ENCODE measurements at regions of chr11 and their contacts with region 1.

Region 1: DNA sequence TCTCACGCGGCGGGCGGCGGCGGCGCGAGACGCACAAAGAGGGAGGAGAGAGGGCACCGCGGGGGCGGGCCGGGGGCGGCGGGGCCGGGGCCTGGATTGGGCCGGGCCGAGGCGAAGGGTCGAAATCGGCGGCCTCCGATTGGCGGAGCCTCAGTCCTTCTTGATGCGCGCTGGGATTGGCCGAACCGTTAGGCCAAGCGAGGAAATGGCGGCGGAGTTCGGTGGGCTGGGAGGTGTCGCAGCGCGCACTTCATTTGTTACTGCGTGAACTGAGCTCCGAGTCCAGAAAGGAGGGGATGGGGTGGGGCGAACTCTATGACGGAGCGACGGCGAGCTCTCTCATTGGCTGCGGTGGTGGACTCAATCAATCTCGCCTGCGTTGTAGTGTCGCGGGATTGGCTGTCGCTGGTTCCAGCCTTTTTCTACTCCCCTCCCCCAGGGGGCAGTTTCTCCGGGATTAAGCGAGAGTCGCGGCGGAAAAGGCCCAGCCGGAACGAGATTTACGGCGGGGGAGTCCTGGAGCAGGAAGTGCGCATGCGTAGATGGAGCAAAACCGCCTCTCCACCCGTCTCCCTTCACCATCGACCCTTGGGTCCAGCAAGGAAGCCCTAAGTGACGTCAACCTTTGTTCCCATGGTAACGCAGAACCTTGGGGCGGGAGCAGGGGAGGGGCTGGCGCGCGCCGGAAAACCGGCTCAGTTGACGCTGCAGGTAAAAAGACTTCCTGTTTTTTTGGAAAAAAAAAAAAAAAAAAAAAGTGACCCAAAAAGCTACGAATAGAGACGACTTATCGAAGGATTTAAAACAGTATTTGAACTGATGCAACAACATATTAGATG is at the start of gene SF1:
- DNase-seq: peak; percentile 100
- ATAC-seq: peak; percentile 97
- H3K4me3 ChIP-seq: peak within 1 kb of the TSS; percentile 94 to 98 (median 94)
- H3K27ac ChIP-seq: peak within 1 kb of the TSS; percentile 99
- H3K4me1 ChIP-seq: peaks cover 39% of the 10 kb centered on the region
- H3K27me3 ChIP-seq: no peaks in the 10 kb centered on the region; a peak in 1 of 5 replicates
- CTCF ChIP-seq: peak; percentile 57
- EP300 ChIP-seq: 0 out of 4 replicates have a peak, but pooled peaks of 1 of the 2 experiments have one; percentile 6
- POLR2A ChIP-seq: peak; percentile 95 to 97
- RAD21 ChIP-seq: no peak
- total RNA-seq, gene SF1: 42.5 and 70.4 TPM in 2 replicates

Region 2: GRCh38 chr11:64007629-64008282 is 771.0 kb before region 1 on chr11:
- CTCF ChIA-PET with region 1: no interaction called
- POLR2A ChIA-PET with region 1: no interaction called
- in situ Hi-C with region 1: no loop called
- intact Hi-C with region 1: no loop called
- DNase-seq: peak; percentile 89
- ATAC-seq: peak; percentile 90
- H3K4me3 ChIP-seq: peak overlapping the region; percentile 19 to 70 (median 60); a peak in 5 of 6 replicates
- H3K27ac ChIP-seq: no peak overlapping the region
- H3K4me1 ChIP-seq: peaks cover 21% of the 10 kb centered on the region
- H3K27me3 ChIP-seq: no peaks in the 10 kb centered on the region
- CTCF ChIP-seq: peak; percentile 59
- EP300 ChIP-seq: no peak
- POLR2A ChIP-seq: peak in 1 of 2 experiments; percentile 70; a peak in 2 of 4 replicates
- RAD21 ChIP-seq: peak; percentile 20; the same call in 1 of the 2 replicates

Region 3: GRCh38 chr11:64762674-64763525 is 15.8 kb before region 1 on chr11:
- CTCF ChIA-PET with region 1: no interaction called
- POLR2A ChIA-PET with region 1: interaction called, 24 read pairs
- in situ Hi-C with region 1: no loop called
- intact Hi-C with region 1: no loop called
- DNase-seq: no peak
- ATAC-seq: no peak
- H3K4me3 ChIP-seq: no peak overlapping the region
- H3K27ac ChIP-seq: no peak overlapping the region
- H3K4me1 ChIP-seq: peaks cover 27% of the 10 kb centered on the region
- H3K27me3 ChIP-seq: no peaks in the 10 kb centered on the region
- CTCF ChIP-seq: no peak
- EP300 ChIP-seq: no peak
- POLR2A ChIP-seq: peak in 1 of 2 experiments; percentile 50; a peak in 2 of 4 replicates
- RAD21 ChIP-seq: no peak

Region 4: GRCh38 chr11:64803163-64803845 is 24.6 kb after region 1 on chr11 and contains the start of gene MAP4K2:
- CTCF ChIA-PET with region 1: no interaction called
- POLR2A ChIA-PET with region 1: interaction called, 19 read pairs
- in situ Hi-C with region 1: no loop called
- intact Hi-C with region 1: loop called (anchors 2 kb)
- DNase-seq: peak; percentile 70
- ATAC-seq: peak; percentile 76
- H3K4me3 ChIP-seq: peak within 1 kb of the TSS; percentile 61 to 74 (median 66)
- H3K27ac ChIP-seq: peak within 1 kb of the TSS; percentile 63
- H3K4me1 ChIP-seq: peaks cover 56% of the 10 kb centered on the region
- H3K27me3 ChIP-seq: no peaks in the 10 kb centered on the region
- CTCF ChIP-seq: peak; percentile 65
- EP300 ChIP-seq: no peak
- POLR2A ChIP-seq: 0 out of 4 replicates have a peak, but pooled peaks of 1 of the 2 experiments have one; percentile 40
- RAD21 ChIP-seq: no peak
- total RNA-seq, gene MAP4K2: 7.8 and 8.3 TPM in 2 replicates

Region 5: GRCh38 chr11:64810271-64810890 is 31.7 kb after region 1 on chr11 and contains the start of gene MEN1:
- CTCF ChIA-PET with region 1: no interaction called
- POLR2A ChIA-PET with region 1: interaction called, 15 read pairs
- in situ Hi-C with region 1: no loop called
- intact Hi-C with region 1: no loop called
- DNase-seq: peak; percentile 95
- ATAC-seq: peak; percentile 97
- H3K4me3 ChIP-seq: peak within 1 kb of the TSS; percentile 78 to 90 (median 82)
- H3K27ac ChIP-seq: peak within 1 kb of the TSS; percentile 58
- H3K4me1 ChIP-seq: peaks cover 39% of the 10 kb centered on the region
- H3K27me3 ChIP-seq: no peaks in the 10 kb centered on the region
- CTCF ChIP-seq: 0 out of 2 replicates have a peak, but pooled peaks have one; percentile 10
- EP300 ChIP-seq: no peak
- POLR2A ChIP-seq: peak; percentile 45 to 86
- RAD21 ChIP-seq: no peak
- total RNA-seq, gene MEN1: 15.3 and 20.5 TPM in 2 replicates

Region 6: GRCh38 chr11:64887757-64888405 is 109.2 kb after region 1 on chr11:
- CTCF ChIA-PET with region 1: no interaction called
- POLR2A ChIA-PET with region 1: interaction called, 13 read pairs
- in situ Hi-C with region 1: no loop called
- intact Hi-C with region 1: no loop called
- DNase-seq: peak; percentile 46
- ATAC-seq: peak; percentile 63
- H3K4me3 ChIP-seq: peak overlapping the region; percentile 19 to 76 (median 42)
- H3K27ac ChIP-seq: peak overlapping the region; percentile 67
- H3K4me1 ChIP-seq: peaks cover 90% of the 10 kb centered on the region
- H3K27me3 ChIP-seq: no peaks in the 10 kb centered on the region; a peak in 1 of 5 replicates
- CTCF ChIP-seq: peak; percentile 94
- EP300 ChIP-seq: 0 out of 4 replicates have a peak, but pooled peaks of 1 of the 2 experiments have one; percentile 2
- POLR2A ChIP-seq: no peak; a peak in 1 of 4 replicates
- RAD21 ChIP-seq: peak; percentile 66

Region 7: DNA sequence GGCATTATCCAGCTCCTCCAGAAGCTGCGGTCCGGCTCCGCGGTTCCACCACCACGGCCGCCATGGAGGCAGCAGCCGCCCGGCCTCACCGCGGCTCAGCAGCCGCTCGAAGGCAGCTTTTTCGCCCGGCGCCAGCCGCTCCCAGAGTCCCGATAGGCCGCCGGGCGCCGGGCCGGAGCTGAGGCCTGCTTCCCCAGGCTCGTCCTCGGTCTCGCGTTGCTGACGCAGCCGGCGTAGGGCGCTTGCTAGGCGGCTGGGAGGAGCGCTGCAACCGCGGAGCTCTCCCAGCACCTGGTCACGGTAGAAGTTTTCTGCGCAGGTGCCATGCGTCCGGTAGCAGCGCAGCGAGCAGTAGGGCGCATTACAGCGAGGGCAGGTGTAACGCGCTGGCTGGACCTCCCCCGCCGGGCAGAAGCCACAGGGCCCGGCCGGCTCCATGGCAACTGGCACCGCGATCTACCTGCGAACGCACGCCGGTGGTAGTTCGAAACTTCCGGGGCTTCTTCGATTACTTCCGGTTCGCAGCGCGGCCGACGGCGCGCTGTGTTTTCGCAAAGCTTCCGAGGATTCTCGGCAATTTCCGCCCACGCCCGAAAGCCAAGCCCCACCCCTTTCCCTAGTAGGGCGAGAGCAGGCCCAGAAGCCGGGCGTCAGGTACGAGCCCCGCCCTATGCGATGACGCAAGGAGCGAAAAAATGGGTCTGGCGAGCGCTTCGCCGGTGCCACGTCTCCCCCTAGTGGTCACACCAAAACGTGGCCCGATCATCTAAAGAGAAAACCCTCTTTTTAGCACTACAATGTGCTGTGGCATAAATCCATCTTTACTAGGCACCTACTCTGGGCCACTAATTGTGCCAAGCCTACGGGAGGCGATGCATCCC is 338.7 kb after region 1 on chr11 and contains the start of gene ZNHIT2:
- CTCF ChIA-PET with region 1: no interaction called
- POLR2A ChIA-PET with region 1: interaction called, 14 read pairs
- in situ Hi-C with region 1: no loop called
- intact Hi-C with region 1: no loop called
- DNase-seq: peak; percentile 96
- ATAC-seq: peak; percentile 59
- H3K4me3 ChIP-seq: peak within 1 kb of the TSS; percentile 73 to 88 (median 80)
- H3K27ac ChIP-seq: peak within 1 kb of the TSS; percentile 75
- H3K4me1 ChIP-seq: peaks cover 42% of the 10 kb centered on the region
- H3K27me3 ChIP-seq: no peaks in the 10 kb centered on the region; a peak in 1 of 5 replicates
- CTCF ChIP-seq: peak; percentile 97
- EP300 ChIP-seq: 0 out of 4 replicates have a peak, but pooled peaks of 1 of the 2 experiments have one; percentile 16
- POLR2A ChIP-seq: peak in 1 of 2 experiments; percentile 87; a peak in 2 of 4 replicates
- RAD21 ChIP-seq: peak; percentile 85
- total RNA-seq, gene ZNHIT2: 5.7 and 6.5 TPM in 2 replicates

Region 8: GRCh38 chr11:65850831-65851811 is 1072.4 kb after region 1 on chr11:
- CTCF ChIA-PET with region 1: no interaction called
- POLR2A ChIA-PET with region 1: no interaction called
- in situ Hi-C with region 1: no loop called
- intact Hi-C with region 1: no loop called
- DNase-seq: no peak
- ATAC-seq: peak; percentile 10
- H3K4me3 ChIP-seq: no peak overlapping the region
- H3K27ac ChIP-seq: no peak overlapping the region
- H3K4me1 ChIP-seq: peaks cover 67% of the 10 kb centered on the region
- H3K27me3 ChIP-seq: no peaks in the 10 kb centered on the region
- CTCF ChIP-seq: peak; percentile 57
- EP300 ChIP-seq: no peak
- POLR2A ChIP-seq: no peak; a peak in 2 of 4 replicates
- RAD21 ChIP-seq: no peak

Measured in HepG2 (cell line).